A549 (cell line): ENCODE measurements at regions of chr14 and their contacts with region 1.

Region 1: GRCh38 chr14:75560962-75561432 is 17.4 kb upstream of the FLVCR2 start:
- DNase-seq: peak; percentile 87 to 90
- ATAC-seq: peak; percentile 90 to 94
- H3K4me3 ChIP-seq: 0 out of 3 replicates have a peak overlapping the region, but pooled peaks have one; percentile 9
- H3K27ac ChIP-seq: peak overlapping the region; percentile 84 to 90
- H3K4me1 ChIP-seq: peaks cover 27% of the 10 kb centered on the region
- CTCF ChIP-seq: peak; percentile 93
- EP300 ChIP-seq: 0 out of 5 replicates have a peak, but pooled peaks of 1 of the 2 experiments have one; percentile 24
- POLR2A ChIP-seq: no peak
- RAD21 ChIP-seq: peak; percentile 97 to 98

Region 2: GRCh38 chr14:75293920-75294642 is 266.9 kb before region 1 on chr14:
- CTCF ChIA-PET with region 1: interaction called, 12 read pairs
- POLR2A ChIA-PET with region 1: interaction called, 3 read pairs
- DNase-seq: peak; percentile 97 to 98
- ATAC-seq: peak; percentile 90 to 96
- H3K4me3 ChIP-seq: peak overlapping the region; percentile 69
- H3K27ac ChIP-seq: peak overlapping the region; percentile 89 to 90
- H3K4me1 ChIP-seq: peaks cover 18% of the 10 kb centered on the region
- CTCF ChIP-seq: no peak
- EP300 ChIP-seq: no peak
- POLR2A ChIP-seq: peak; percentile 51
- RAD21 ChIP-seq: no peak

Region 3: GRCh38 chr14:75418849-75419768 is 141.9 kb before region 1 on chr14:
- CTCF ChIA-PET with region 1: interaction called, 11 read pairs
- POLR2A ChIA-PET with region 1: no interaction called
- DNase-seq: peak in 1 of 2 experiments; percentile 46
- ATAC-seq: peak; percentile 36 to 62; a peak in 3 of 6 replicates
- H3K4me3 ChIP-seq: no peak overlapping the region
- H3K27ac ChIP-seq: peak overlapping the region; percentile 63 to 80
- H3K4me1 ChIP-seq: peaks cover 30% of the 10 kb centered on the region
- CTCF ChIP-seq: no peak
- EP300 ChIP-seq: no peak
- POLR2A ChIP-seq: no peak
- RAD21 ChIP-seq: no peak

Region 4: GRCh38 chr14:75487155-75487671 is 73.8 kb before region 1 on chr14:
- CTCF ChIA-PET with region 1: interaction called, 171 read pairs
- POLR2A ChIA-PET with region 1: no interaction called
- DNase-seq: no peak
- ATAC-seq: no peak
- H3K4me3 ChIP-seq: no peak overlapping the region
- H3K27ac ChIP-seq: peak overlapping the region in 1 of 2 experiments; percentile 4; a peak in 1 of 6 replicates
- H3K4me1 ChIP-seq: peaks cover 8% of the 10 kb centered on the region; the same call in 2 of the 3 replicates
- CTCF ChIP-seq: no peak
- EP300 ChIP-seq: no peak
- POLR2A ChIP-seq: no peak
- RAD21 ChIP-seq: no peak

Region 5: DNA sequence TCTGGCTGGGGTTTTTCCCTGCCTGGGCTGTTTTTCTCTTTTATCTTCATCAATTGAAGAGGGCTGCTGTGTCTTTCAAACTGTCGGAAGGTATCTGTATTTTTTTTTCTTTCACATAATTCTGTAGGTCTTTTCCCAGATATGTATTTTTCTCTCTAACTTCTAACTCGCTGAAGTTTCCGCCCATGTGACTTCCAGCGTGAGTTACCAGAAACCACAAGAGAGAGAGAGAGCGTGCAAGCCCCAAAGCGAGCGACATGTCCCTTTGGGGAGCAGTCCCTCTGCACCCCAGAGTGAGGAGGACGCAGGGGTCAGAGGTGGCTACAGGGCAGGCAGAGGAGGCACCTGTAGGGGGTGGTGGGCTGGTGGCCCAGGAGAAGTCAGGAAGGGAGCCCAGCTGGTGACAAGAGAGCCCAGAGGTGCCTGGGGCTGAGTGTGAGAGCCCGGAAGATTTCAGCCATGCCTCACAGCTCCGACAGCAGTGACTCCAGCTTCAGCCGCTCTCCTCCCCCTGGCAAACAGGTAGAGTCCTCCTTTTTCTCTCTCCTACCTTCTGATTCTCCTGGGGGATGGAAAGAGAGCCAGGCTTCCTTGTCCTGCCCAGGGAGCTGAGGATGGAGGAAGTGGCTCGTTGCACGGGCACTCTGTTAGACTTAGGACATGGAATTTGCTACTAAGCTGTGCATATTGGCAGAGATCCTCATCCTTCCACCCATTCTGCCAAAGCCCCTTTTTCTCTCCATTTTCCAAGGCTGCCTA is 38.6 kb before region 1 on chr14 and contains the start of gene BATF:
- CTCF ChIA-PET with region 1: interaction called, 50 read pairs
- POLR2A ChIA-PET with region 1: no interaction called
- DNase-seq: no peak
- ATAC-seq: no peak
- H3K4me3 ChIP-seq: no peak within 1 kb of the TSS
- H3K27ac ChIP-seq: peak within 1 kb of the TSS; percentile 30 to 57; a peak in 4 of 6 replicates
- H3K4me1 ChIP-seq: peaks cover 23% of the 10 kb centered on the region
- CTCF ChIP-seq: no peak
- EP300 ChIP-seq: no peak
- POLR2A ChIP-seq: no peak
- RAD21 ChIP-seq: no peak
- polyA plus RNA-seq, gene BATF: not detected in 2 replicates

Region 6: GRCh38 chr14:75577729-75578101 is 16.7 kb after region 1 on chr14:
- CTCF ChIA-PET with region 1: interaction called, 143 read pairs
- POLR2A ChIA-PET with region 1: interaction called, 3 read pairs
- DNase-seq: peak; percentile 86 to 90
- ATAC-seq: peak; percentile 90 to 96
- H3K4me3 ChIP-seq: peak overlapping the region; percentile 53
- H3K27ac ChIP-seq: peak overlapping the region; percentile 75 to 79
- H3K4me1 ChIP-seq: peaks cover 8% of the 10 kb centered on the region
- CTCF ChIP-seq: peak; percentile 86
- EP300 ChIP-seq: no peak
- POLR2A ChIP-seq: no peak
- RAD21 ChIP-seq: peak; percentile 92 to 93